Left ventricle myocardium inferior (tissue), 1 donor: ENCODE measurements at regions of chr3 and their contacts with region 1.

Region 1: DNA sequence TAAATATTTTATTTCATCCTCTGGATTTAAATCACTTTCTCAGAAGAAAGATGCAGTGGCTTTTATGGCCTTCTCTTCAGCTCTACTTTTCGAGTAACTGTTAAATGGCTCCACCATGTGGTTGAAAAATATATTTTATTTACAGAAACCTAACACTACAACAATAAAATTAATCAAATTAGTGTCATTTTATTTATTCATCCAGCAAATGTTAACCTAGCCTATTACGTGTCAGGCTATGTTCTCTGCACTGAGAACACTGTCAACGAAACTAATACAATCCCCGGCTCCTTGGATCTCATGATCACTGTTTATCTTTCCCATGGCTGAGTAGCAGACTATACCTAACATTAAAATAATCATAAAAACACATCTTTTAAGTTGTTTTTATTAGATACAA is 148.0 kb upstream of the OSTN start:
- DNase-seq: no peak
- H3K4me3 ChIP-seq: no peak overlapping the region
- H3K27ac ChIP-seq: no peak overlapping the region
- H3K4me1 ChIP-seq: no peaks in the 10 kb centered on the region
- H3K27me3 ChIP-seq: no peaks in the 10 kb centered on the region
- CTCF ChIP-seq: peak; percentile 51

Region 2: DNA sequence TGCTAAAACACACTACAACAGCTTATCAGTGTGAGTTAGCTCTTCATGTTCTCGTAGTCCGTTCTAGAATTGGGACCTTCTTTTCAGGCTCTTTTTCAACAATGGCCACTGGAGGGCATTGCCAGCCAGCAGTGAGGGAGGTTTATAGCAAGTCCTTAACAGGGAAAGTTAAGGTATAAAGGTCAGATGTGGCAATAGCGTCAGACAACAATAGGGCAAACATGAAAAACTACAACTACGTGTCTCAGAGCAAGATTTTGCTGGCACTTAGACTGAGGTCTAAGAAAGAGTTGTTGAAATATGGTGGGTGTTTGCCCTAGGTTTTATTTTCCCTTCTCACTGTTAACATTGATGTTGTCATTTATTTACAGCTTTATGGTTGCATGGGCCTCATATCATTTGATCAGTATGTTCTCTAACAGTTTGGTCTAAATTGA is 349.9 kb before region 1 on chr3:
- intact Hi-C with region 1: loop called (anchors 10 kb)
- DNase-seq: peak; percentile 19
- H3K4me3 ChIP-seq: no peak overlapping the region
- H3K27ac ChIP-seq: no peak overlapping the region
- H3K4me1 ChIP-seq: peaks cover 10% of the 10 kb centered on the region
- H3K27me3 ChIP-seq: no peaks in the 10 kb centered on the region
- CTCF ChIP-seq: peak; percentile 65

Region 3: DNA sequence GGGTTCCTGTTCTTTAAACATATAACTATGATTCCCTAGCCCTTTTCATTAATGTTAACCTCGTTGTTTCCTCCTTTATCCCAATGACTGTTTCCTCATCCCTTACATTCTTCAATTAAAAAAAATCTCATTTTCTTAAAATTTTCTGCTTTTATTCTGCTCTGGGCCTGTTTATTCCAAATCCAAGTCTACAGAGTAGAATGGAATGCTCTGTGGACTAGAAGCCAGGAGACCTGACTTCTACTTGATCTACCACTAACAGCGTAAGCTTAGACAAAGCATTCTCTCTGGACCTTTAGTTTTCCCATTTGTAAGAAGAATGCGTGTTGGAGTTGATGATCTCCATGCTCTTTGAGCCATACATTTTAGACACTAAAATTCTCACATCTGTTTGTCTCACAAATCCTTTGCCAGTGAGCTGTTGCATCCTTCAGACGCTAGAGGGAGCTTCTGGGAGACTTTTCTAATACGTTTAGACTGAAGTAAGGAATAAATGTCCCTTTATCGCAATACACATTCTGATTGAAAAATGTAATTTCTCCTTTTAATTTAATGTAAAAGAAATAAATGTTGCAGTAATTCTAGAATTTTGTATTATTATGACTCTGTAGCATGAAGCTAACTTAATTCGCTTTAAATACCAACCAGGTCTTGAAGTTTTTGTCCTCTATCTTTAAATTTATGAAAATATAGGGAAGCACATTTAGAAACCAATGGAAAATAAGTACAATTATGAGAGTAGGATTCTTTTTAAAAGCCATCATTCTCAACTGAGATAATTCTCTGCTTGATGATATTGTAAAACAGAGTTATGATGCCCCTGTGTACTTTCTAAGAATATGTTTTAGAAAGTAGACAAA is 166.8 kb before region 1 on chr3:
- intact Hi-C with region 1: loop called (anchors 10 kb)
- DNase-seq: no peak
- H3K4me3 ChIP-seq: no peak overlapping the region
- H3K27ac ChIP-seq: no peak overlapping the region
- H3K4me1 ChIP-seq: no peaks in the 10 kb centered on the region
- H3K27me3 ChIP-seq: peaks cover 14% of the 10 kb centered on the region
- CTCF ChIP-seq: peak; percentile 92

Region 4: DNA sequence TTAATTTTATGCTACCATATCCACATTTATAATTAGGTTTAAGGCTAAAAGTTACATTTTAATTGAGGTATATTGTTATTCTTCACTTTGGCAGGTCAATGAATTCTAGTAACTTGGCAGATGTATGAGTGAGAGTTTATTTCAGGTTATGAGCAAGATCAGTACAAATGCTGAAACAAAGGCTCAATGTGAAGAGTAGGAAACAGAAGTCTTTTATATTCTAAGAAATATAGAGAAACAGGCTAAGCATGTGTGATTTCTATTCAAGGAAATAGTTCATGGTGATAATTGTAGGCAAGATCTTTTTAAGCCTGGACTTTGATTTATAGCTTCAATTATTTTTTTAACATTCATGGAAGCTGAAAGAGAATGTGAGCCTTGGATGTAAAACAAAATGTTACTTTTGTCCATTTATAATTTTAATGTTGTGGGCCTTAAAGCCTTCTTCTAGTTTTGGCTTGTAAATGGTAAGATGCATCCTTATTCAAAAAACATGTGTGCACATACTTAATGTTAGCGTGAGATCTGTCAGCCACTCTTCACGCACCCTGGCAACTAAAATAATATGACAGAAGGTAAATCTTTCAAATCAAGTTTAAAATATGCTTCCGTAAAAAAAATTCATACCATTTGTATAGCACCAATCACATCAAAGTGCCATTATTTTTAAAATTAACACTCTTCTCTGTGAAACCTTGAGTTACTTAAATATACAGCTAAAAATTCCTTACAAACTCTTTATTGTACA is 125.2 kb after region 1 on chr3:
- intact Hi-C with region 1: no loop called
- DNase-seq: no peak
- H3K4me3 ChIP-seq: no peak overlapping the region
- H3K27ac ChIP-seq: no peak overlapping the region
- H3K4me1 ChIP-seq: no peaks in the 10 kb centered on the region
- H3K27me3 ChIP-seq: no peaks in the 10 kb centered on the region
- CTCF ChIP-seq: no peak

Region 5: DNA sequence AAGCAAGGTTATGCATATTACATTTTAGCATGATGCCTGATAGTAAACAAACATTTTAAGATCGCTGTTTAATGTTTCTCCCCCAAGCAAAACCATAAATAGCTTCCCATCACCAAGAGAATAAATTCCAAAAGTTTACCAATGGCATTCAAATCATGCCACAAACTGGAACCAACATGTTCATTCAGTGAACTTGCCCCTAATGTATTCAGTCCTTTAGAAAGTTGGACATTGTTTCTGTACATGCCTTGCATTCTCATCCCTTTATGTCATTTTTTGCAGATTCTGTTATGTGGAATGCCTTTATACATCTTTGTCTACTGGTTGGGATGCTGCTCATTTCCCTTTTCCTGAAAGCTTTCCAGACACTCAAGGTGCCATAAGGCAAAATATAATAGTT is 515.4 kb after region 1 on chr3:
- intact Hi-C with region 1: no loop called
- DNase-seq: no peak
- H3K4me3 ChIP-seq: no peak overlapping the region
- H3K27ac ChIP-seq: no peak overlapping the region
- H3K4me1 ChIP-seq: no peaks in the 10 kb centered on the region
- H3K27me3 ChIP-seq: no peaks in the 10 kb centered on the region
- CTCF ChIP-seq: no peak